ENCODE measurements at regions of chr1 and their contacts with region 1.

Region 1: DNA sequence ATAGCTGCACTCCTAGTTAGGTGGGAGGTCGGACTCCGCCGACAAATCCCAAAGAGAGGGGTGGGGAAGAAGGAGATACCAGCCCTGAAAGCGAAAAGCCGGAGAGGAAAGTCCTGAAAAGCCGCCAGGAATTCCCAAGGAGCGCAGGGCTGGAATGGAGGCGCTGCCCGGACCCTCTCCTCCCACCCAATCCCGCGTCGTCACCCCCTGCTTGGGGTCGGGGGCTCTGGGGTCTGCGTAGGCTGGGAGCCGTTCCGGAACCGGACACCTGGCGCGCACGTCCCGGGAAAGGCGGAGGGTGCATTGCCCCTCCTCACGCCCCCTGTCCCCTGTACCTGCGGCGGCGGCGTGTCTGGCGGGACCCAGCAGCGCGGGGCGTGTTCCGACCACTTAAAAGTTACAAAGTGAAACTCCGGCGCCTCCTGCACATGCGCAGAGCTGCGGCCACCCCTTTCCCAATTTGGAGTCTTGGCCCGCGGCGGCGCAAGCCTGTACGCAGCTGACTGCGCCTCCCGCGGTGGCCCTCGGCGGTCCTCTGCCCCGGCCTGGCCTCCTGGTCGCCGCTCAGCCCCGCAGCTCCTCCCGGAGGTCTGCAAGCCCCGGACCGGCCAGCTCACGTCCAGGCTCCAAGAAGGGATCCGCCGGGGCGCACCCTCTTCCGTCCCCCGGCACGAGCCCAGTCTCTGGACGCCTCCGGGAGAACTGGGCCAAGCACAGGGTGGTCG is at the start of gene TMEM63A:
- DNase-seq: peak; percentile 94
- ATAC-seq: peak; percentile 71
- H3K4me3 Mint-ChIP-seq: peak within 1 kb of the TSS; percentile 76
- H3K27ac Mint-ChIP-seq: peak within 1 kb of the TSS; percentile 88
- H3K4me1 Mint-ChIP-seq: peaks cover 51% of the 10 kb centered on the region
- H3K27me3 Mint-ChIP-seq: no peaks in the 10 kb centered on the region
- CTCF ChIP-seq: no peak
- total RNA-seq, gene TMEM63A: 51.4 to 54.6 TPM

Region 2: GRCh38 chr1:225866061-225866837 is 15.9 kb before region 1 on chr1:
- CTCF ChIA-PET with region 1: interaction called, 12 read pairs
- POLR2A ChIA-PET with region 1: interaction called, 24 read pairs
- intact Hi-C with region 1: no loop called
- DNase-seq: peak; percentile 90
- ATAC-seq: peak; percentile 91
- H3K4me3 Mint-ChIP-seq: peak overlapping the region; percentile 1
- H3K27ac Mint-ChIP-seq: peak overlapping the region; percentile 79
- H3K4me1 Mint-ChIP-seq: peaks cover 42% of the 10 kb centered on the region
- H3K27me3 Mint-ChIP-seq: no peaks in the 10 kb centered on the region
- CTCF ChIP-seq: no peak

Region 3: GRCh38 chr1:225871359-225872074 is 10.6 kb before region 1 on chr1:
- CTCF ChIA-PET with region 1: interaction called, 12 read pairs
- POLR2A ChIA-PET with region 1: interaction called, 24 read pairs
- intact Hi-C with region 1: no loop called
- DNase-seq: no peak
- ATAC-seq: no peak
- H3K4me3 Mint-ChIP-seq: no peak overlapping the region
- H3K27ac Mint-ChIP-seq: no peak overlapping the region
- H3K4me1 Mint-ChIP-seq: peaks cover 43% of the 10 kb centered on the region
- H3K27me3 Mint-ChIP-seq: no peaks in the 10 kb centered on the region
- CTCF ChIP-seq: no peak

Region 4: DNA sequence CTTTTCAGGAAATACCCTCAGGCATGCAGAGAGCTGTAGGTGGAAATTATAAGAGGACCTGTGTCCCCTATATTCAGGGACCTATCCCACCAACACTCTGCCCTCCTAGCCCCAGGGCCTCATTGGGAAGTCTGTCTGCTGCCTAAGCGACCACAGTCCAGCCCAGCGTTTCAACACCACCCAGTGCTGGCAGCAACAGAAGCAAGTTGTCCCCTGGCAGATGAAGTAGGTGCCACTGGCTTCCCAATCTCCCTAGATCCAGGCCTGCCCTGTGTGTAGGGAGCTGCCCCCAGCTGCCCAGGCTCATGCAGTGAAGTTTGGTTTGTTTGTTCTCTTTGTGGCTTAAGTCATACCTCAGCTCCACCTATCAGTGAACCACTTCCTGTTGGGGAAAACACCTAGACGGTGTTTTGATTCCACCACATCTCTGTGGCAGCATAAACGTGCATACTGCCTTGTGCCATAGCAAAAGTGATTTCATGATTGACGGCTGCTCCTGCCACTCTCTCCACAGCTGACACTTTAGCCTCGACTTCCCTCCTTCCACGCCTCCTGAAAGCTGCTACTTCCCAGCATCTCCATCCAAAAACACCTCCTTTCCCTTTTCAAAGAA is 14.9 kb after region 1 on chr1:
- CTCF ChIA-PET with region 1: interaction called, 10 read pairs
- POLR2A ChIA-PET with region 1: interaction called, 35 read pairs
- intact Hi-C with region 1: no loop called
- DNase-seq: peak; percentile 85
- ATAC-seq: peak; percentile 96
- H3K4me3 Mint-ChIP-seq: peak overlapping the region; percentile 57
- H3K27ac Mint-ChIP-seq: peak overlapping the region; percentile 91
- H3K4me1 Mint-ChIP-seq: peaks cover 38% of the 10 kb centered on the region
- H3K27me3 Mint-ChIP-seq: no peaks in the 10 kb centered on the region
- CTCF ChIP-seq: no peak

Region 5: DNA sequence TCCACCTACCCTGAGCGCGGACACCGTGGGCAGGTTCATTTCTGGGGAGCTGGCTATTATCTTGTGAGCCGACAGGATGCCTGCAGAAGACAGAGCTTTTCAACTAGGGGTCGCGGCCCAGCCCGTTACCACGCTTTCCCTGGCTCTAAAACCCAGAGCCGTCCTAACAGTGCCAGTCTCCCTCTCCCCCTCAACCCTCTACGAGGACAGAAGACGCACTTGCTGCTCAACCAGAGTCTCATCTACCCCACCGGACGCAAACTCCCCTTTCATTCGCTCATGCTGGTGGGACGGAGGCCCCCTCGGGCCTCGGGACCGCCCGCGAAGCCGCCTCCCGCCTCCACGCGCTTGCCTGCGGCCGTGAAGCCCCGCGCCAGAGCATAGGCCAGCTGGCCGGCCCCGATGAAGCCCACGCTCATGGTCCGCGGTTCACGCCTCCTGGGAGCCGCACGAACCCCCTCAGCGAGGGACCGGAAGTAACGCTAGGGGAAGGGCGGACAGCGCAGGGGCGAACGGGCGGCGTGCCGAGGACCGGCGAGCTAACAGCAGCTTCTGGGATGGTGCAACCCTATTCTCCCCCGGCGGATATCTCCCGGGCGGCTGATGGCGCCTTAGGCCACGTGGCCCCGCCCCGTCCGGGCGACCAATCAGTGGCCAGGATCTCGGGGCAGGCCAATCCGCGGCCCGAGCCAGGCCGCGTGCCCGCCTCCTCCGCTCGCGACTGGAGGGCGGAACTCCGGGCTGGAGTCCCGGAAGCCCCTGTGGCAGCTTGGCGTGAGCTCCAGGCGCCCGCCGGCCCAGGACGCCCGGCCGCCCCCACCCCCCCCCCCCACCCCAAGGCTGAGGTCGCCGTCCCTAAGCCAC is 41.8 kb after region 1 on chr1 and contains the start of gene PYCR2:
- CTCF ChIA-PET with region 1: interaction called, 3 read pairs
- POLR2A ChIA-PET with region 1: interaction called, 28 read pairs
- intact Hi-C with region 1: no loop called
- DNase-seq: peak; percentile 96
- ATAC-seq: peak; percentile 98
- H3K4me3 Mint-ChIP-seq: peak within 1 kb of the TSS; percentile 91
- H3K27ac Mint-ChIP-seq: peak within 1 kb of the TSS; percentile 97
- H3K4me1 Mint-ChIP-seq: peaks cover 52% of the 10 kb centered on the region
- H3K27me3 Mint-ChIP-seq: no peaks in the 10 kb centered on the region
- CTCF ChIP-seq: no peak
- total RNA-seq, gene PYCR2: 132 to 134 TPM

Measured in activated CD8-positive, alpha-beta T cell treated with anti-CD3 and anti-CD28 coated beads for 36 hours (primary cell).